Adrenal gland (tissue), 19 donors: ENCODE measurements at regions of chr6 and their contacts with region 1.

Region 1: GRCh38 chr6:33014841-33015634 is 5.6 kb upstream of the HLA-DOA start:
- DNase-seq: peak; percentile 38 to 74 (median 64)
- H3K4me3 ChIP-seq: no peak overlapping the region
- H3K27ac ChIP-seq: peak overlapping the region in 1 of 5 donors; percentile 59
- H3K4me1 ChIP-seq: peaks cover 12 to 15% of the 10 kb centered on the region in 2 donors
- H3K27me3 ChIP-seq: peaks cover 10% of the 10 kb centered on the region
- CTCF ChIP-seq: peak; percentile 75 to 88 (median 83)
- POLR2A ChIP-seq: no peak

Region 2: DNA sequence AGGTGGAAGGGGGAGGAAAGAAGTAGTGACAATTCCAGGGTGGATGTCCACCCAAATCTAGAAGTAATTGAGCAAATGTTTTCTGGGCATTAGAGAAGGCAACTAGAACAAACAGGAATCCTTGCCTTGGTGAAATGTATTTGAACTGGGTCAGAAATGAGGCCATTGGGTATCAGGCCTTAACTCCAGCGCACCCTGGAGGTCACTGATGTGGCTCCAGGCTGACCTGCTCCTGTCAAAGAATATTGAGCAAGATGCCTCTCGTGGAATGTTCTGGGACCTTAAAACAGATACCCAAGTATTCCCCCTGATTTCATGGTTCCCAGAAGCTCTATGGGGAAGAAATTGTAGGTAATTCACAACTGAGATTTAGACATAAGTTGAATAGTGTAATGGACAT is 67.7 kb after region 1 on chr6:
- intact Hi-C with region 1: loop called (anchors 5 kb)
- DNase-seq: peak in 2 of 7 donors; percentile 64 to 80
- H3K4me3 ChIP-seq: no peak overlapping the region
- H3K27ac ChIP-seq: no peak overlapping the region
- H3K4me1 ChIP-seq: peaks cover 4 to 8% of the 10 kb centered on the region in 2 donors
- H3K27me3 ChIP-seq: no peaks in the 10 kb centered on the region
- CTCF ChIP-seq: peak; percentile 43 to 79 (median 57)
- POLR2A ChIP-seq: no peak

Region 3: DNA sequence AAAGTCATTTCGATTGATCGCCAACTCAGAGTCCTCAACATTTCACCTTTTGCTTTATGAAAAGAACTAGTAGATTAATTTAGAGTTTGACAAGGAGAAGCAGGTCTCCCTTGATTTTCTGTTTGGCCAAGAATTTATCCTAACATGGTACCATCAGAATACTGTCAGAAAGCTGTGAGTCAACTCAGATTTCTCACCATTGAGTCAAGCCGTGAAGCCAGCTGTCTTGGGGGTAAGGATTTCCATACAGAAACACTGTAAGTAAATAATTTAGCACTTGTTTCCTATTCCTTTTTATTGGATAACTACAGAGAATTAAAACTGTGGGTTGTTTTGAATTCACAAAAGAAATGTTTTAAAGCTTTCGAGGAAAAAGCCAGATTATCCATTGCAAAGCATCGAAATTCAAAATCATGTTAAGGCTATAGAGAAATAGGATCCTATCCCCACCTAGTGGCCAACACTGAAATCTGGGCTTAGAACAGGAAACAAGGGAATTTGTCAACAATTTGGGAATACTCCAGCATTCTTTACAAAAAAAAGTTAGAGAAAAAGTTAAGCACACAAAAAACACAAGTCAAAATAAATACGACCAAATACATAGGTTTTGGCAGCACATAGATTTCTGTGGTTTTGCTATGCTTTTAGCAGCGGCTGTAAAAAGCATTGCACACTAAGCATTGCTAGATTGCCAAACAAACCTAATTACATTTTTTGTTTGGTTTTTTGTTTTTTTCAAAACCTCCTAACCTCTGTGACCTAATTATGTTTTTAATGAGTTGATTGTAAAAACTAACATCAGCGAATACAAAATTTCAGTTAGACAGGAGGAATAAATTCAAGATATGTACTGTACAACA is 133.0 kb after region 1 on chr6:
- intact Hi-C with region 1: loop called in 1 of 2 experiments (anchors 10 kb)
- DNase-seq: peak in 5 of 7 donors; percentile 22 to 63 (median 47)
- H3K4me3 ChIP-seq: no peak overlapping the region
- H3K27ac ChIP-seq: no peak overlapping the region
- H3K4me1 ChIP-seq: no peaks in the 10 kb centered on the region
- H3K27me3 ChIP-seq: peaks cover 6% of the 10 kb centered on the region
- CTCF ChIP-seq: peak; percentile 73 to 84 (median 78)
- POLR2A ChIP-seq: no peak